CD4-positive, alpha-beta memory T cell (primary cell): ENCODE measurements at regions of chr9 and their contacts with region 1.

Region 1: GRCh38 chr9:128947422-128948301 is at the starts of genes DOLK and NUP188:
- DNase-seq: peak; percentile 96 to 100 (median 97)
- H3K4me3 ChIP-seq: peak within 1 kb of the TSS; percentile 81 to 90
- H3K4me3 Mint-ChIP-seq: peak within 1 kb of the TSS; percentile 94 to 100 (median 98)
- H3K27ac ChIP-seq: peak within 1 kb of the TSS; percentile 87
- H3K27ac Mint-ChIP-seq: peak within 1 kb of the TSS; percentile 93 to 99 (median 98)
- H3K4me1 ChIP-seq: peaks cover 29% of the 10 kb centered on the region
- H3K4me1 Mint-ChIP-seq: peaks cover 16 to 39% (median 27%) of the 10 kb centered on the region in 4 donors
- H3K27me3 ChIP-seq: no peaks in the 10 kb centered on the region
- H3K27me3 Mint-ChIP-seq: no peaks in the 10 kb centered on the region
- total RNA-seq, gene DOLK: 9.9 to 12.9 TPM
- total RNA-seq, gene NUP188: 70.1 to 70.8 TPM

Region 2: GRCh38 chr9:128286440-128286839 is 661.2 kb before region 1 on chr9:
- CTCF ChIA-PET with region 1: no interaction called
- POLR2A ChIA-PET with region 1: no interaction called
- intact Hi-C with region 1: no loop called
- DNase-seq: no peak
- H3K4me3 ChIP-seq: no peak overlapping the region
- H3K4me3 Mint-ChIP-seq: no peak overlapping the region
- H3K27ac ChIP-seq: no peak overlapping the region
- H3K27ac Mint-ChIP-seq: peak overlapping the region in 1 of 7 donors; percentile 41
- H3K4me1 ChIP-seq: no peaks in the 10 kb centered on the region
- H3K4me1 Mint-ChIP-seq: peaks cover 0 to 2% (median 0%) of the 10 kb centered on the region in 4 donors
- H3K27me3 ChIP-seq: no peaks in the 10 kb centered on the region
- H3K27me3 Mint-ChIP-seq: no peaks in the 10 kb centered on the region

Region 3: GRCh38 chr9:128656416-128657343 is 291.0 kb before region 1 on chr9 and contains the start of gene DYNC2I2:
- CTCF ChIA-PET with region 1: no interaction called
- POLR2A ChIA-PET with region 1: no interaction called
- intact Hi-C with region 1: loop called (anchors 2 kb)
- DNase-seq: peak; percentile 95 to 96 (median 96)
- H3K4me3 ChIP-seq: peak within 1 kb of the TSS; percentile 95 to 98
- H3K4me3 Mint-ChIP-seq: peak within 1 kb of the TSS; percentile 91 to 98 (median 94)
- H3K27ac ChIP-seq: peak within 1 kb of the TSS; percentile 95
- H3K27ac Mint-ChIP-seq: peak within 1 kb of the TSS; percentile 95 to 100 (median 99)
- H3K4me1 ChIP-seq: peaks cover 8% of the 10 kb centered on the region
- H3K4me1 Mint-ChIP-seq: peaks cover 2 to 15% (median 6%) of the 10 kb centered on the region in 4 donors
- H3K27me3 ChIP-seq: no peaks in the 10 kb centered on the region
- H3K27me3 Mint-ChIP-seq: no peaks in the 10 kb centered on the region
- total RNA-seq, gene DYNC2I2: 4.3 to 4.6 TPM

Region 4: DNA sequence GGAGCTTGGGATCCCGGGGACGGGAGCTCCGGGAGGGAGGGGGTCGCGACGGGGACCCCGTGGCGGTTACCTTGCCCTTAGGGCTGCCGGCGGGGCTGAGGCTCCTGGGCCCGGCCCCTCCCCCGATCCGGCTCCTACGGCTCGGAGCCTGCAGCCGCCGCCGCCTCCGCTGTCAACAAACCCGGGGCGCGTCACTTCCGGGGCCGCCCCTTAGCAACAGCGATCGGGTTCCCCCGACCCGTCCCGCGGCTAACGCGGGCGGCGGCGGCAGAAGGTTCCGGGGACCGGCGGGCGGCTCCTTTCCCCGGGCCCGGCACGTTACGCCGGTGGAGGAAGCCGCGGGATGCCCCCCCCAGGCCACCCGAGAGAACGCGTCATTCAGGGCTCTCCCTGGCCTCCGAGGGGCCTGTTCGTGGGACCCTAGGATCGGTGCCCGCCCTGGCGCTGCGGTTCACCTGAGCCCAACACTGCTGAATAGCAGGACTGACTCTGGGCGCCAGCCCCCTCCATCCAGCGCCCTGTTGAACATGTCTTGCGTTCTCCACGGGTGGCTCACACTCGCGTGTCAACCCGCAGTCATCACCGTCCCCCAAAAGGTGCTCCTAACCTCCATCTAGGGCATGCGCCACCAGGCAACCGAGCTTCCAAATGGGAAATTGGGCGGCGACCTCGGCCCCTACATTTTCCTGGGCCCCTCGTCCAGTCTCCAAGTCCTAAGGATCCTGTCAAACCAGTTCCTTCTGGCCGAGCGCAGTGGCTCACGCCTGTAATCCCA is 175.7 kb before region 1 on chr9 and contains the start of gene ZER1:
- CTCF ChIA-PET with region 1: no interaction called
- POLR2A ChIA-PET with region 1: no interaction called
- intact Hi-C with region 1: loop called (anchors 1 kb)
- DNase-seq: peak; percentile 93 to 95 (median 94)
- H3K4me3 ChIP-seq: peak within 1 kb of the TSS; percentile 73 to 98
- H3K4me3 Mint-ChIP-seq: peak within 1 kb of the TSS; percentile 96 to 99 (median 98)
- H3K27ac ChIP-seq: peak within 1 kb of the TSS; percentile 96
- H3K27ac Mint-ChIP-seq: peak within 1 kb of the TSS; percentile 92 to 99 (median 99)
- H3K4me1 ChIP-seq: peaks cover 32% of the 10 kb centered on the region
- H3K4me1 Mint-ChIP-seq: peaks cover 19 to 38% (median 26%) of the 10 kb centered on the region in 4 donors
- H3K27me3 ChIP-seq: no peaks in the 10 kb centered on the region
- H3K27me3 Mint-ChIP-seq: no peaks in the 10 kb centered on the region
- total RNA-seq, gene ZER1: 37.9 to 44.2 TPM

Region 5: DNA sequence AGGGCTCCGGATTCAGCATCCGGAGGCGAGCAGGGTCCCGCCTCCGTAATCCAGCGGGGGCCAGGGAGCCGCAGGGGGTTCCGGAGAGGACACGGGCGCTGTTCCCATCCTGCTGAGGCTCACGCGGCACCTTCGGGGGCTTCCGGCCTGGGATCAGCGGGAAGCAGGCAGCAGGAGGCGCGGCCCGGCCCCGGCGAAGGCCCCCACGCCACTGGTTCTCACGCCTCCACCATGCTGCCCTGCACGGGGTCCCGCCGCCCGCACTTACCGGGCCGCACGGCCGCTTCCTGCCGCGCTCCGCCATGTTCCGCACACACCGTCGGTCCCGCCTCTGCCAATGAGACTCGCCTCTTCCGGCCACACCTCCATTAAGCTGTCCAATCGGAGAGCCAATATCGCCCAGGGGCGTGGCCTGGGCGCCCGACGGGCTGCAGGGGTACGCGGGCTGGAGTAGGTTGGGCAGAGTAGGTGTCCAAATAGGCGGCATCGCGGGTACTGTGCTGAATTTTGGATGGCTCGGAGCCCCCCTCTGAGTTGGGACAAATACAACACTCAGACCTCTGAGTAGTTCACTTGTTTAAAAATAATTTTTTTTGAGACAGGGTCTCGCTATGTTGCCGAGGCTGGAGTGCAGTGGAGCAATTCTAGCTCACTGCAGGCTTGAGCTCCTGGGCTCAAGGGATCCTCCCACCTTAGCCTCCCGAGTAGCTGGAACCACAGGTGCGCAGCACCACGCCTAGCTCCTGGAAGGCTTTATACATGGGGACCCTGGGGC is 118.0 kb before region 1 on chr9 and contains the start of gene SPOUT1:
- CTCF ChIA-PET with region 1: no interaction called
- POLR2A ChIA-PET with region 1: interaction called, 4 read pairs
- intact Hi-C with region 1: loop called (anchors 1 kb)
- DNase-seq: peak; percentile 91 to 94 (median 93)
- H3K4me3 ChIP-seq: peak within 1 kb of the TSS; percentile 71 to 76
- H3K4me3 Mint-ChIP-seq: peak within 1 kb of the TSS; percentile 90 to 99 (median 96)
- H3K27ac ChIP-seq: peak within 1 kb of the TSS; percentile 65
- H3K27ac Mint-ChIP-seq: peak within 1 kb of the TSS; percentile 74 to 98 (median 90)
- H3K4me1 ChIP-seq: peaks cover 22% of the 10 kb centered on the region
- H3K4me1 Mint-ChIP-seq: peaks cover 10 to 31% (median 16%) of the 10 kb centered on the region in 4 donors
- H3K27me3 ChIP-seq: no peaks in the 10 kb centered on the region
- H3K27me3 Mint-ChIP-seq: no peaks in the 10 kb centered on the region
- total RNA-seq, gene SPOUT1: 79.1 to 86.0 TPM

Region 6: DNA sequence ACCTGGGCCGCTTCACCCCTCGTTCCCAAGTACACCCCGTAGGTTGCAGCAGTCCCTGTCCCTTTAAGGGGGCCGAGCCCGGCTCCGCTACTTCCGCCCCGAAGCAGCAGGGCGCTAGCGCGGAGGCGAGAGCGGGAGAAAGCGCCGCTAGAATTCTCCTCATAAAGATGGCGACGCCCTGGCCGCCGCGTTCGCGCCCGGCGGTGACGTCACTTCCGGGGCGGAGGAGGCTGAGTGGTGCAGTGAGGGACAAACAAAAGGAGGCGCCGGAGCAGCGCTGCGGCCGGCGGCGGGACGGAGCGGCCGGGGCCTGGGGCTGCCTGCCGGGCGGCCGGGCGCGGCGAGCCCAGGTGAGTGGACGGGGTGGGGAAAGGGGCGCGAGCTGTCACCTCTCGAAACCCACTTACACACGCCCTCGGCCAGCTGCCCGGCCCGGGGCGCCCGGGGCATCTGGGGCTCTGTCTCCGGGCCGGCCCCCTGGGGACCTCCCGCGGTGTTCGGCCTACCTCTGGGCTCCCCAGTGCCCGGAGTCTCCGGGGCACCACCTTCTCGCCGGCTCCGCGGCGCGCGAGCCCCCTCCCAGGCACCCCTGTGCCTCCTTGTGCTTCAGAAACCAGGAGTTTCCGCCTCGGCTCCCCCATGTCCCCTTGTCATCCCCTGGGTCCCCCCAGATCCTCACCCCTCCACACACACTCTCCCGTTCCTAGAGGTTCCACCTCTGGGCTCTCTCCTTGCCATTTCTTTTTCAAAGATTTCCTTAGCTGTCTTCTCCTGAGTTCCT is 65.6 kb before region 1 on chr9 and contains the starts of genes KYAT1 and LRRC8A:
- CTCF ChIA-PET with region 1: no interaction called
- POLR2A ChIA-PET with region 1: no interaction called
- intact Hi-C with region 1: loop called (anchors 1 kb)
- DNase-seq: peak; percentile 96 to 99 (median 97)
- H3K4me3 ChIP-seq: peak within 1 kb of the TSS; percentile 95 to 99
- H3K4me3 Mint-ChIP-seq: peak within 1 kb of the TSS; percentile 94 to 99 (median 98)
- H3K27ac ChIP-seq: peak within 1 kb of the TSS; percentile 84
- H3K27ac Mint-ChIP-seq: peak within 1 kb of the TSS; percentile 92 to 98 (median 98)
- H3K4me1 ChIP-seq: peaks cover 43% of the 10 kb centered on the region
- H3K4me1 Mint-ChIP-seq: peaks cover 34 to 72% (median 56%) of the 10 kb centered on the region in 4 donors
- H3K27me3 ChIP-seq: no peaks in the 10 kb centered on the region
- H3K27me3 Mint-ChIP-seq: no peaks in the 10 kb centered on the region
- total RNA-seq, gene KYAT1: 9.8 to 12.4 TPM
- total RNA-seq, gene LRRC8A: 24.4 to 26.4 TPM

Region 7: DNA sequence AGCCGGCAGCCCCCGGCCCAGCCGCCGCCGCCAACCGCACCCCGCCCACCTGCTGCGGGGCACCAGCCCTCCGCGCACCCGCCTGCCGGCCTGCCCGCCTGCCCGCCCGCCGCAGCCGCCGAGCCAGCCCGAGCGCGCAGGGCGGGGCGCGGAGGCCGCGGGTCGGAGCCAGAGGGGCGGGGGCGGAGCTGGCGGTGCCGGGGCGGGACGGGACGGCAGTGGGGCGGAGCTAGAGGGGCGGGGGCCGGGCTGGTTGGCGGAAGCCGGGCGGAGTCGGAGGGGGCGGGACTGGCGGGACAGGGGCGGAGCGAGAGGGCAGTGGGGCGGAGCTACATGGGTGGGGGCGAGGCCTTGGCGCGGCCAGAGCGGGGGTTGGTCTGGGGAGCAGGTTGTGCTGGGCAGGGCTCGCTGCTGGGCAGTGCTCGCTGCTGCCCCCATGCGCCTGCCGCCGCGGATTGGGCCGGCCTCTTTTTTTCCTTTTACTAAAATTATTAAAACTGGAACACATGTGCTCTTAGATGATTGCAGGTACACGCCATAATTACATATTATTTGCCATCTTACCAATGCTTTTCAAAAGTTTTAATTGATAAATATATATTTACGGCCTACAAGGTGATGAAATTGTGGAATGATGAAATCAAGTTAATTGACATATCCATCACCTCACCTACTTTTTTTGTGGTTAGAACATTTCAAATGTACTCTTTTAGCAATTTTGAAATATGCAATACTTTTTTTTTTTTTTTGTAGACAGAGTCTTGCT is 80.7 kb after region 1 on chr9 and contains the start of gene SH3GLB2:
- CTCF ChIA-PET with region 1: no interaction called
- POLR2A ChIA-PET with region 1: no interaction called
- intact Hi-C with region 1: loop called (anchors 2 kb)
- DNase-seq: peak; percentile 84 to 93 (median 86)
- H3K4me3 ChIP-seq: peak within 1 kb of the TSS; percentile 37 to 52
- H3K4me3 Mint-ChIP-seq: peak within 1 kb of the TSS; percentile 79 to 92 (median 84)
- H3K27ac ChIP-seq: peak within 1 kb of the TSS; percentile 34
- H3K27ac Mint-ChIP-seq: peak within 1 kb of the TSS; percentile 78 to 90 (median 85)
- H3K4me1 ChIP-seq: peaks cover 20% of the 10 kb centered on the region
- H3K4me1 Mint-ChIP-seq: peaks cover 15 to 29% (median 20%) of the 10 kb centered on the region in 4 donors
- H3K27me3 ChIP-seq: no peaks in the 10 kb centered on the region
- H3K27me3 Mint-ChIP-seq: no peaks in the 10 kb centered on the region
- total RNA-seq, gene SH3GLB2: 111 to 113 TPM